Naive thymus-derived CD4-positive, alpha-beta T cell (primary cell): ENCODE measurements at regions of chr19 and their contacts with region 1.

Region 1: GRCh38 chr19:16542045-16542909 is at the start of gene CHERP:
- DNase-seq: peak; percentile 90 to 96 (median 93)
- ATAC-seq: peak; percentile 95
- H3K4me3 ChIP-seq: peak within 1 kb of the TSS; percentile 90
- H3K4me3 Mint-ChIP-seq: peak within 1 kb of the TSS; percentile 90 to 99 (median 92)
- H3K27ac ChIP-seq: peak within 1 kb of the TSS; percentile 91
- H3K27ac Mint-ChIP-seq: peak within 1 kb of the TSS; percentile 81 to 97 (median 93)
- H3K4me1 ChIP-seq: peaks cover 25 to 39% of the 10 kb centered on the region in 2 donors
- H3K4me1 Mint-ChIP-seq: peaks cover 44 to 69% (median 55%) of the 10 kb centered on the region in 7 donors
- H3K27me3 ChIP-seq: no peaks in the 10 kb centered on the region
- H3K27me3 Mint-ChIP-seq: no peaks in the 10 kb centered on the region
- total RNA-seq, gene CHERP: 53.8 to 80.7 (median 62.7) TPM

Region 2: GRCh38 chr19:15210323-15210781 is 1331.9 kb before region 1 on chr19:
- CTCF ChIA-PET with region 1: no interaction called
- POLR2A ChIA-PET with region 1: no interaction called
- intact Hi-C with region 1: no loop called
- DNase-seq: no peak
- ATAC-seq: peak; percentile 97
- H3K4me3 ChIP-seq: no peak overlapping the region
- H3K4me3 Mint-ChIP-seq: no peak overlapping the region
- H3K27ac ChIP-seq: no peak overlapping the region
- H3K27ac Mint-ChIP-seq: no peak overlapping the region
- H3K4me1 ChIP-seq: no peaks in the 10 kb centered on the region
- H3K4me1 Mint-ChIP-seq: peaks cover 0 to 3% (median 0%) of the 10 kb centered on the region in 7 donors
- H3K27me3 ChIP-seq: no peaks in the 10 kb centered on the region
- H3K27me3 Mint-ChIP-seq: peaks cover 0 to 9% (median 6%) of the 10 kb centered on the region in 5 donors

Region 3: DNA sequence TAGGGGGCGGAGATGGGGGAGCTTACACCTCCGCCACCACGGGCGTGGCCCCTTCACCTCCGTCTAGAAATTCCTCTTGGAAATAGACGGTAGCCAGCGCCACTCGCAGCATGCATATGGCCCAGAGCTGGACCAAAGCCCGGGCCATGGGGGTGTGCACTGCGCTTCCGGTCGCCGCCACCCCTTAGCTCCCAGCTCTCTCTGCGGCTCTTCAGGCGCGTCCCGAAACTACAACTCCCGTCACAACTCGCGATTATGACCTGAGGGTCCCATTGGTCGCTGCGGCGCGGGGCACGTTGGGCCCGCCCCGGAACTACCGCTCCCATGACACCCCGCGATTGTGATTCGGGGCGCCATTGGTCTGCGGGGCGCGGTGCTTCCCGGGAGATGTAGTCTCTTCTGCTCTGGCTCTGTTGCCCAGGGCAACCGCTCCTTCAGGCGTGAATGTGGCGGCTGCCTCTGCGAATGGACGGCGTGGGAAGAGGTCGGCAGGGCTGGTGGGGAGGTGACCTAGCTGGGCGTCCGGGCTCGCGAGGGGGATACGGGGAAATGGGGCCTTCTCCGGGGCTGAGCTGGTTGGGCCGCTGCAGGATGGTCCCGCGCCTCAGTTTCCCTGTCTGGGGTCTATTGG is 46.2 kb before region 1 on chr19 and contains the starts of genes C19orf44 and CALR3:
- CTCF ChIA-PET with region 1: no interaction called
- POLR2A ChIA-PET with region 1: no interaction called
- intact Hi-C with region 1: loop called (anchors 1 kb)
- DNase-seq: peak; percentile 84 to 97 (median 96)
- ATAC-seq: peak; percentile 99
- H3K4me3 ChIP-seq: peak within 1 kb of the TSS; percentile 90
- H3K4me3 Mint-ChIP-seq: peak within 1 kb of the TSS; percentile 86 to 98 (median 94)
- H3K27ac ChIP-seq: peak within 1 kb of the TSS; percentile 72
- H3K27ac Mint-ChIP-seq: peak within 1 kb of the TSS; percentile 74 to 98 (median 87)
- H3K4me1 ChIP-seq: peaks cover 0 to 4% of the 10 kb centered on the region in 2 donors
- H3K4me1 Mint-ChIP-seq: peaks cover 10 to 23% (median 19%) of the 10 kb centered on the region in 7 donors
- H3K27me3 ChIP-seq: no peaks in the 10 kb centered on the region
- H3K27me3 Mint-ChIP-seq: no peaks in the 10 kb centered on the region
- total RNA-seq, gene C19orf44: 1.5 to 6.0 (median 3.4) TPM
- total RNA-seq, gene CALR3: not detected

Region 4: GRCh38 chr19:16516381-16516780 is 25.9 kb before region 1 on chr19:
- CTCF ChIA-PET with region 1: no interaction called
- POLR2A ChIA-PET with region 1: no interaction called
- intact Hi-C with region 1: no loop called
- DNase-seq: no peak
- ATAC-seq: no peak
- H3K4me3 ChIP-seq: no peak overlapping the region
- H3K4me3 Mint-ChIP-seq: no peak overlapping the region
- H3K27ac ChIP-seq: no peak overlapping the region
- H3K27ac Mint-ChIP-seq: no peak overlapping the region
- H3K4me1 ChIP-seq: peaks cover 0 to 11% of the 10 kb centered on the region in 2 donors
- H3K4me1 Mint-ChIP-seq: peaks cover 0 to 4% (median 0%) of the 10 kb centered on the region in 7 donors
- H3K27me3 ChIP-seq: no peaks in the 10 kb centered on the region
- H3K27me3 Mint-ChIP-seq: no peaks in the 10 kb centered on the region

Region 5: DNA sequence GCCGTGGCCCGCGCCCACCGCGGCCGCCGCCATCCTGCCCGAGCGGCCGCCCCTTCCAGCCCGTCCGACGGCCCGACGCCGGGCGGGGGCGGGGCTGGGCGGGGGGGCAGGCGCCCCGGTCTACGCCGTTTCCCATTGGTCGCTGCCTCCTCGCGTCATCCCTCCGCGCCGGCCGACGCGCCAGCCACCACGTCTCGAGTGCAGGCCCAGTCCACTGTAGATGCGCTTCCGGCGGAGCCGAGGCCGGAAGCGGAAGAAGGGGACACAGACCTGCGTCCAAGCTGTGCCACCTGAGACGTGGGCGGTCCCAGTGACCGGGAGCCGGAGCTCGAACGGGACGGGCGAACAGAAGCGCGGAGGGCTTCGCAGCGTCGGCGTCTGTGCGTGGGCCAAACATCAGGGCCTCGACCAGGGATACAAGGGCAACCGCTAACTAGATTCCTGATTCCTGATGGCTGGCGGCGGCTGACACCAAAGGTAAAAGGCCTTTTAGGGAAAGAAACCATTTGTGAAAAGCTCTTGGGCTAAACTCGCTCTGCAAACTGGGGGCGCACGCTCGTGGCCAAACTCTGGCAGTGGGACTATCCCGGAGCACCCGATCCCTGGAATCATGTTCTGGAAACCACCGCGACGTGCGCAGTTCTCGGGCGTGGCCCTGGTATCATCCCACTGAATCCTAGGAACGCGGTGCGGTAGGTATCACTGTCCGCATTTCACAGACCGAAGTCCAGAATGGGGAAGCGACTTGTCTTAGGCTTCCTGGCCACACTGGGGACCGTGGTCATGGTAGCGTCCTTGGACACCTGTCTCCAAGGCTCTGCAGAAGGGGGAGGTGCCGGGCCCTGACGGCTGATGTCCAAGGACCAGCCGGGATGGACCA is 30.3 kb after region 1 on chr19 and contains the start of gene SLC35E1:
- CTCF ChIA-PET with region 1: interaction called, 3 read pairs
- POLR2A ChIA-PET with region 1: interaction called, 27 read pairs
- intact Hi-C with region 1: loop called (anchors 1 kb)
- DNase-seq: peak; percentile 80 to 92 (median 89)
- ATAC-seq: peak; percentile 98
- H3K4me3 ChIP-seq: peak within 1 kb of the TSS; percentile 97
- H3K4me3 Mint-ChIP-seq: peak within 1 kb of the TSS; percentile 97 to 100 (median 99)
- H3K27ac ChIP-seq: peak within 1 kb of the TSS; percentile 95
- H3K27ac Mint-ChIP-seq: peak within 1 kb of the TSS; percentile 94 to 100 (median 99)
- H3K4me1 ChIP-seq: peaks cover 28 to 30% of the 10 kb centered on the region in 2 donors
- H3K4me1 Mint-ChIP-seq: peaks cover 35 to 74% (median 47%) of the 10 kb centered on the region in 7 donors
- H3K27me3 ChIP-seq: no peaks in the 10 kb centered on the region
- H3K27me3 Mint-ChIP-seq: peaks cover 0 to 2% (median 0%) of the 10 kb centered on the region in 5 donors
- total RNA-seq, gene SLC35E1: 33.0 to 67.3 (median 58.7) TPM

Region 6: DNA sequence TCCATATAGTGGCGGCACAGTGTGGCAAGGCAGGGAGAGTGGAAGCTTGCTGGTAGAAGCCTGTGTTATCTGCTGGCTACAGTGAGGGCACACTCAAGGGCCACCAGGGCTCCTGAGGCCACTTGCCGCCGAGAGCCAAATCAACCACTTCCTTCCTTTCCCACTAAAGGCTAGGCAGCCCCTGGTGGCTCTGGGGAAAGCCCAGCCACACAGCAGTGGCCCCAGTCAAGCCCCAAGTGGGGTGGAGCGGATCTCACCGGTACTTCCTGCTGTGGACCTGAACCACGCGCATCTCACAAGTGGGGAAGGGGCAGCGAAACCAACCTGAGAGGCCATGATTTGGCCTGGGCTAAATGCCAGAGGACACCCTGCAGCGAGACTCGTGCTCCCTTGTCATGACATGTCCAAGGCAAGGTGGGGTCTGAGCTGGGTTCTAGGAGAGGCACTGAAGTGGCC is 51.9 kb after region 1 on chr19:
- CTCF ChIA-PET with region 1: no interaction called
- POLR2A ChIA-PET with region 1: no interaction called
- intact Hi-C with region 1: loop called in 1 of 2 experiments (anchors 1 kb)
- DNase-seq: peak in 3 of 9 donors; percentile 27 to 54 (median 35)
- ATAC-seq: peak; percentile 76
- H3K4me3 ChIP-seq: peak overlapping the region; percentile 22
- H3K4me3 Mint-ChIP-seq: peak overlapping the region; percentile 73 to 93 (median 82)
- H3K27ac ChIP-seq: peak overlapping the region; percentile 65
- H3K27ac Mint-ChIP-seq: peak overlapping the region; percentile 80 to 95 (median 92)
- H3K4me1 ChIP-seq: peaks cover 32 to 34% of the 10 kb centered on the region in 2 donors
- H3K4me1 Mint-ChIP-seq: peaks cover 52 to 86% (median 73%) of the 10 kb centered on the region in 7 donors
- H3K27me3 ChIP-seq: no peaks in the 10 kb centered on the region
- H3K27me3 Mint-ChIP-seq: no peaks in the 10 kb centered on the region

Region 7: GRCh38 chr19:17226002-17226933 is 684.0 kb after region 1 on chr19 and contains the start of gene OCEL1:
- CTCF ChIA-PET with region 1: no interaction called
- POLR2A ChIA-PET with region 1: no interaction called
- intact Hi-C with region 1: loop called in 1 of 2 experiments (anchors 5 kb)
- DNase-seq: peak; percentile 91 to 98 (median 97)
- ATAC-seq: peak; percentile 94
- H3K4me3 ChIP-seq: peak within 1 kb of the TSS; percentile 98
- H3K4me3 Mint-ChIP-seq: peak within 1 kb of the TSS; percentile 82 to 98 (median 94)
- H3K27ac ChIP-seq: peak within 1 kb of the TSS; percentile 81
- H3K27ac Mint-ChIP-seq: peak within 1 kb of the TSS; percentile 86 to 99 (median 97)
- H3K4me1 ChIP-seq: peaks cover 0 to 2% of the 10 kb centered on the region in 2 donors
- H3K4me1 Mint-ChIP-seq: peaks cover 3 to 8% (median 5%) of the 10 kb centered on the region in 7 donors
- H3K27me3 ChIP-seq: no peaks in the 10 kb centered on the region
- H3K27me3 Mint-ChIP-seq: no peaks in the 10 kb centered on the region
- total RNA-seq, gene OCEL1: 21.8 to 32.8 (median 29.8) TPM